ENCODE measurements at regions of chr2 and their contacts with region 1.

Region 1: GRCh38 chr2:9423100-9423921 is at the starts of genes CPSF3 and ITGB1BP1:
- DNase-seq: peak; percentile 94 to 96
- ATAC-seq: peak; percentile 93 to 96
- H3K4me3 ChIP-seq: peak within 1 kb of the TSS; percentile 84 to 99 (median 98)
- H3K27ac ChIP-seq: peak within 1 kb of the TSS; percentile 82 to 96 (median 91)
- H3K4me1 ChIP-seq: peaks cover 27 to 29% of the 10 kb centered on the region in 2 donors
- H3K27me3 ChIP-seq: no peaks in the 10 kb centered on the region
- CTCF ChIP-seq: peak in 3 of 5 experiments; percentile 11 to 35 (median 27)
- POLR2A ChIP-seq: peak; percentile 55 to 60
- total RNA-seq, gene CPSF3: 20.9 to 51.8 (median 24.1) TPM
- total RNA-seq, gene ITGB1BP1: 21.4 to 28.0 (median 26.4) TPM

Region 2: DNA sequence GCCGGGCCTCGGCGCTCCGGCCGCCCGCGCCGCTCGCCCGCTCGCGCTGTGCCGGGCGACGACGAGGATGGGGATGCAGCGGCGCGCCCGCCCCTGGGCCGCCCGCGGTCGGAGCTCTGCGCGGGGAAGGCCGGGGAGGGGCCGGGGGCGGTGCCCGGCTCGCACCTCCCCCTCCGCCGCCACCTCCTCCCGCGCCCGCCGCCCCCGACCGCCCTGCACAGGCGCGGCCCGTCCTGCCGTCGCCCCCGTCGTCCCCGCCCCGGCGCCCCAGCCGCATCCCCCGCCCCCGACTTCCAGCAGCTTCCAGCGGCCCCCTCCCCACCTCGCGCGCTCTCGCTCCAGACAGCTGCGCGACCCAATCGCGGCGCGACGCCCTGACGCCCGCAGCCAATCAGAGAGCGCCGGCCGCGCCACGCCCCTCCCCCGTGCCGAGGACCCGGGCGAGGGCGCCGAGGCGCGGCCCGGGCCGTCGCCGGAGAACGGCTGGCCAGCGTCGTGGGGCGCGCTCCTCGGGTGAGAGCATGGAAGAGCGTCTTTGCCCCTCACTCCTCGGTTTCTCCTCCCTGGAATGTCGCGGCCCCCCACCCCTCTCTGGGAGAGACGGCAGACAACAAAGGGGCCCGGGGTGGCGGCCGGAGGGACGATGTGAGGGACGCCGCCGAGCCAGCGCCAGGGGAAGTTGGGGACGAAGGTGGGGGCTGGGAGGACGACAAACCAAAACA is 419.5 kb before region 1 on chr2 and contains the start of gene MBOAT2:
- in situ Hi-C with region 1: no loop called
- intact Hi-C with region 1: loop called (anchors 5 kb)
- DNase-seq: peak; percentile 59 to 70
- ATAC-seq: peak; percentile 93 to 96
- H3K4me3 ChIP-seq: peak within 1 kb of the TSS; percentile 65 to 73 (median 70)
- H3K27ac ChIP-seq: peak within 1 kb of the TSS; percentile 60 to 68 (median 68)
- H3K4me1 ChIP-seq: peaks cover 0 to 6% of the 10 kb centered on the region in 2 donors
- H3K27me3 ChIP-seq: peaks cover 0 to 4% (median 0%) of the 10 kb centered on the region in 3 donors
- CTCF ChIP-seq: no peak
- POLR2A ChIP-seq: peak; percentile 47 to 61
- total RNA-seq, gene MBOAT2: 0.83 to 5.8 (median 3.9) TPM

Region 3: GRCh38 chr2:9451231-9451630 is 27.9 kb after region 1 on chr2:
- in situ Hi-C with region 1: no loop called
- intact Hi-C with region 1: no loop called
- DNase-seq: no peak
- ATAC-seq: no peak
- H3K4me3 ChIP-seq: no peak overlapping the region
- H3K27ac ChIP-seq: no peak overlapping the region
- H3K4me1 ChIP-seq: no peaks in the 10 kb centered on the region
- H3K27me3 ChIP-seq: no peaks in the 10 kb centered on the region
- CTCF ChIP-seq: no peak
- POLR2A ChIP-seq: no peak

Measured in gastrocnemius medialis (tissue), 4 donors.